ENCODE measurements at regions of chr5 and their contacts with region 1.

Region 1: DNA sequence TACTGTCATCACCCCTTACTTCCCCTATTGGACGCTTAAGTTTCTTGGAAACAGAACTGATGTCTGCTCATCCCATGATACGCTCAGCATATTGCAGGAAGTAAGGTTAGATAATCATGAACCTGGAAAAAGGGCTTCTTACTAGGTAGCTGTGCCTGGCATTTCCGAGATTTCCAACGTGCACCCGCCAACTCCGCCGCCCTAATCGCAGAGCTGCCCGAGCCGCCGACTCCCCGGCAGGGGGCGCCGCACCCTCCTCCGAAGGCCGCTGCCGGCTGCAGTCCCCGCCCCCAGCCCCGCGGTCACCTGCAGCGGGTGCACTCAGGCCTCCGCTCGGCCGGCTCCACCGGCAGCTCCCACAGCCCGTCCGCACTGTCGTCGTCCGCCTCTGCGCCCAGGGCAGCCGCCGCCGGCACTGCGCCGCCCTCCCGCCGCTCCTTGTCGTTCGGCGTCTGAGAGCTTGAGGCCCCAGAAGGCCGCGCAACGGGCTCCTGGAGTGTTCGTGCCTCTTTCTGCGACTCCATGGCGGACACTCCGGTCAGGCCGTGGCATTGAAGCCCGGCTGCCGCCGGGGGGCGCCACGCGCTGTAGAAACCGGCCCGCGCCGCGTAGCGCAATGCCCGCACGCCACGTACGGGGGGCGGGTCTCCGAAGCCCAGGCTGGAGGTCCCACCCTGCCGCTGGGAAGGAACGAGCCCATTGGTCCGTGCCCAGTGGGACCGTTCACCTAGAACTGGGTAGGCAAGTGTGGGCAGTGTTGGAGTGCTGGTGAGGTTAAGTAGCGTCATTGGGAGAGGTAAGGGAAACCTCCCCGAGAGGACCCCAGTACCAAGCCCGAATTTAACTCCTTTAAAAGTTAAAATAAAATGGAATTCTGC is at the start of gene DTWD2:
- DNase-seq: peak; percentile 89 to 92
- H3K4me3 ChIP-seq: peak within 1 kb of the TSS; percentile 62 to 78
- H3K27ac ChIP-seq: peak within 1 kb of the TSS; percentile 91 to 94
- H3K4me1 ChIP-seq: no peaks in the 10 kb centered on the region
- H3K27me3 ChIP-seq: no peaks in the 10 kb centered on the region
- CTCF ChIP-seq: peak; percentile 79 to 81 (median 80)
- POLR2A ChIP-seq: peak in 1 of 2 donors; percentile 45
- total RNA-seq, gene DTWD2: 1.5 to 42.1 (median 15.9) TPM

Region 2: GRCh38 chr5:119067450-119067849 is 79.2 kb after region 1 on chr5:
- intact Hi-C with region 1: loop called (anchors 5 kb)
- DNase-seq: no peak
- H3K4me3 ChIP-seq: no peak overlapping the region
- H3K27ac ChIP-seq: no peak overlapping the region
- H3K4me1 ChIP-seq: peaks cover 0 to 2% of the 10 kb centered on the region in 2 donors
- H3K27me3 ChIP-seq: no peaks in the 10 kb centered on the region
- CTCF ChIP-seq: no peak
- POLR2A ChIP-seq: no peak

Region 3: DNA sequence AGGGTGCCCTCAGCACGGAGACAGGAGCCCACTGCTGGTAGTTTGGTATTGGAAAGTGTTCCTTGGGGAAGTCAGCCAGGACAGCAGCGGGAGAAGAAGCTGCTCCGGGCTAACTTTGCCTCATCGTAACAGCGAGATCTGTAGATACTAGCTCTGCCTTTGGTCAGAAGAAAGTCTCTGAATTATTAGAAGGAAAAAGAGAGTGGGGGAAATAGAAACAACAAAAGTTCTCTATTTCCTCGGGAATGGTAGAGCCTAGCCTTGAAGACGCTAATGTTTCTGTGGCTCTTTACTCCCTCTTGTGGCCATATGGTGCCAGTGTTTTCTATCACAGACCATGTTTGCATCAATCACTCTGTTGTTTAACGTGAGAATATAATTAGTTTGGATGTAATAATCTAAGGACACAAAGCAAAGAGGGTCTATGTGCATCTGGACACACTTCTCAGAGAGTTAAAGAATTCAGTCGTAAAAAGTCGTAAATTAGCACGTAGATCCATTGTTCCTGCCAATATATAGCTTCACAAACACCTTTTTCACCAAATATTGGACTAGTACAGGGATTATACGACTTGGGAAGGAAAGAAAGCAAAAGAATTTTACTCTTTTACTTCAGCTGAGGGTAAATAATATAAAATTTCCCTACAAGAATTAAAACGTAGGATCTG is 423.8 kb after region 1 on chr5:
- intact Hi-C with region 1: loop called (anchors 10 kb)
- DNase-seq: peak; percentile 38 to 68
- H3K4me3 ChIP-seq: peak overlapping the region; percentile 34 to 41
- H3K27ac ChIP-seq: peak overlapping the region; percentile 81 to 84
- H3K4me1 ChIP-seq: no peaks in the 10 kb centered on the region
- H3K27me3 ChIP-seq: no peaks in the 10 kb centered on the region
- CTCF ChIP-seq: peak; percentile 87 to 92 (median 90)
- POLR2A ChIP-seq: no peak